Right ventricle myocardium inferior (tissue), 1 donor: ENCODE measurements at regions of chr12 and their contacts with region 1.

Region 1: DNA sequence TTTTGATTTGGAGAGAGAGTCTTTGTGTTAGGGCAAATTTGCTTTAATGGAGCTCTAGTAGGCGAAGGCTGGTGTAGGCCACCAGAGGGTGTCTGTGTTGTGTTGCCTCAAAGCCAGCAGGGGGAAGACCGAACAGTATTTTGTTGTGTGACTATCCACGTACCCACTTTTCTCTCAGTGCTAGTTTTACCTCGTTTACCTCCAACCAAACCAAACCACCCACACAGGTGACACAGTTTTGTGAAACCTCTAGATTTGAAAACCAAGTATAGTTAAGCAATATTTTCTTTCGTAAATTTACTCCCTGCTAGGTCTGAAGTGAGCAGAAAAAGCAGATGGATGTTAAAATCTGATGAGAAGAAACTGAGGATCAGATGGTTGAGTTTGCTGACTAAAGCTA is 36.3 kb upstream of the NPFF start:
- DNase-seq: no peak
- ATAC-seq: peak; percentile 87

Region 2: DNA sequence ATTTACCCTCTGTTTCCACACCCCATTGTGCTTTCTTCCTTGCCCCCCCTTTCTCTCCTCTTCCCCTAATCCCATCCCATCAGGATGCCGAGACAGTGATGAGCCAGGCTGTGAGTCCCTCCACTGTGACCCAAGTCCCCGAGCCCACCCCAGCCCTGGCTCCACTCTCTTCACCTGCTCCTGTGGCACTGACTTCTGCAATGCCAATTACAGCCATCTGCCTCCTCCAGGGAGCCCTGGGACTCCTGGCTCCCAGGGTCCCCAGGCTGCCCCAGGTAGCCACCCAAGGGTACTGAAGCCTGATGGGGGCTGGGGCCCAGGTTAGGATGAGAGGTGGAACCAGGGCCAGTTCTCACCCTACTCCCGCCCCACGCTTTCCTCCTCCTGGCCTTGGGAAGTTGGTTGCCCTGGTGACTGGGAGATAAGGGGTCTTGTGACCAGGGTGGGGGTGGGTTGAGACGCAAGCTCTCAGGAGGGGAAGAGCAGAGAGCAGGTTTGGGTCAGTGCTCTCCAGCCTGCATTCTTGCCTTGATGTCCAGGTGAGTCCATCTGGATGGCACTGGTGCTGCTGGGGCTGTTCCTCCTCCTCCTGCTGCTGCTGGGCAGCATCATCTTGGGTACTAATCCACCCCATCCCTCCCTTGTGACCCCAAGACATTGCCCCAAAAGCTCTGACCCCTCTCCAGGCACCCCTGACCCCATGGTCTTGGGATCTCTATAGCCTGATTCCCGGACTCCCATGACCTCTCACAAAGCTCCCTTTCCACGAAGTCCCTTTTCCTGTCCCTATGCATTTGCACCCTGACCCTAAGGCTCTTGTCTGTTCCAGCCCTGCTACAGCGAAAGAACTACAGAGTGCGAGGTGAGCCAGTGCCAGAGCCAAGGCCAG is 118.7 kb before region 1 on chr12:
- intact Hi-C with region 1: no loop called
- DNase-seq: no peak
- ATAC-seq: no peak

Region 3: GRCh38 chr12:53596920-53597363 is 53.4 kb after region 1 on chr12:
- intact Hi-C with region 1: loop called (anchors 5 kb)
- DNase-seq: no peak
- ATAC-seq: peak; percentile 88

Region 4: DNA sequence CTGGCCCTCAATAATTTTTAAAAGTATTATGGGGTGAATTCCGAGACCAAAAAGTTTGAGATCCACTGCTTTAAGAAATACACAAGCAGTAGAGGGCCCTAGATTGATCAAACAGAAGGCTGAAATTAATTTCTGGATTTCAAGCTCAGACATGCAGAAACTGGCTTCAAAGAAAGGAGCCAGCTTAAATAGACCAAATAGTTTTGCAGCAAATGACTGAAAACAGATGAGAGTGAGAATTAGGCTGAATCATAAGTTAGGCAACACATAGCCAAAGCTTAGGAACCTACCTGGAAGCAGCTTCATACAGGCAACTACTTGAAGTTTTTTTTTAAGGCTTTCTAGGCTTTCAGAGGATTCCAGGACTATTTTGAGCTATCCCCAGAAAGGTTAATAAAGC is 70.3 kb after region 1 on chr12:
- intact Hi-C with region 1: no loop called
- DNase-seq: no peak
- ATAC-seq: no peak

Region 5: DNA sequence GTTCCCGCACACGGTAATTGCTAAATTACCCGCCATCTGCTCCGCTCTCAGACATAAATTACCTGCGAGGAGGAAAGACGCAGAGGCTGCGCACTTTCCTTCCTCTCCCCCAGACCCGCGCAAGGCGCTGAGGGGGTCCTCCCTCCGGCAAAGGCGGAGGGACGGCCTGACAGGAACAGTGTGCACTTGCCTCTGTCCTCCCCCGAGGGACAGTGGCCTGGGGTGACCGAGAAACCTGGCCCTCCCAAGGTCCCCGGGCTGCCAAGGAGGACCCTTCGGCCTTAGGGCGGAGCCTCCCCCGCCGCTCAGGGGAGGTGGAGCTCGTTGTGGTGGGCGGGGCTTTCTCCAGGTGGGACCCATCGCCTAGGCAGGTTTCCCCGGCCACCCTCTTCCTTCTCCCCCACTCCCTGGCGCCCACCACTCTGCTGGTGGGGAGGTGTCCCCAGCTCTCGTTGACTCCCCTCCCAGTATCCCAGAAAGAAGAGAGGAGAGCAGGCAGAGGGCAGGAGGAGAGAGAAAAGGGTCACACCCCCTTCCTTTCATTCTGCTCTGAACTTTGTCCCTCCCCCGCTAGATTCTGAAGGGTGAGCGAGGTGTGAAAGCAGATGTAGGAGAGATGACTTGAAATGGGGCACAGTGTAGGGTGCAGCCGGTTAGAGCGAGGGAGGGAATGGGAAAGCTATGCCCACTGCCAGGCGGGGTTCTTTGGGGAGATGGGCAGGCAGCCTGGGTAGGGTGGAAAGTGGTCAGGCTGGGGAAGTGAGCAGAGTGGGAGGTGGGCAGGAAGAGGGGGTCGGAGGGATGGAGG is 195.1 kb after region 1 on chr12:
- intact Hi-C with region 1: no loop called
- DNase-seq: no peak
- ATAC-seq: no peak